AG04449 (cell line): ENCODE measurements at regions of chr9 and their contacts with region 1.

Region 1: GRCh38 chr9:37784616-37785483 is at the start of gene EXOSC3:
- DNase-seq: no peak
- H3K4me3 ChIP-seq: peak within 1 kb of the TSS; percentile 99
- CTCF ChIP-seq: no peak

Region 2: DNA sequence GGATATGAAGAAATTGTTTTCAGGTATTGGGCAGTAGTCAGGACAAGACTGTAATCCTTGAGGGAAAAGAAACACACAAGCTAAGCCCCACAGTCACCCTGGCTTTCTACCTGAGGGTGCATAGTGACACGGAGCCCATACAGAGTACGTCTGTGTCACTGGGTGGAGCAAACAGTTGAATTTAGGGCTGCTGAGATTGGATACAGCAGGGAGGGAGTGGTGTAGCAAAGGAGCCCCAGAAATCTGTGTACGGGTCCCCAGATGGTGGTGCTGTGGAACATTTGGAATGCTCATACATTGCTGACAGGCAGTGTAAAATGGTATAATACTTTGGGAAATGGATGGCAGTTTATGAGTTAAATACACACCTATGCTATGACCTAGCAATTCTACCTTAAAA is 26.1 kb before region 1 on chr9:
- CTCF ChIA-PET with region 1: no interaction called
- POLR2A ChIA-PET with region 1: no interaction called
- DNase-seq: no peak
- H3K4me3 ChIP-seq: no peak overlapping the region
- CTCF ChIP-seq: no peak

Region 3: GRCh38 chr9:37800631-37801286 is 15.9 kb after region 1 on chr9 and contains the start of gene DCAF10:
- CTCF ChIA-PET with region 1: interaction called, 6 read pairs
- POLR2A ChIA-PET with region 1: interaction called, 11 read pairs
- DNase-seq: no peak
- H3K4me3 ChIP-seq: peak within 1 kb of the TSS; percentile 99
- CTCF ChIP-seq: peak; percentile 22